Activated CD8-positive, alpha-beta memory T cell treated with anti-CD3 and anti-CD28 coated beads, Interleukin-2, amount 10 ng/mL, durations not matched to agents 7 days and 5 days (primary cell): ENCODE measurements at regions of chr6 and their contacts with region 1.

Region 1: GRCh38 chr6:154675602-154676088 is 57.6 kb upstream of the SCAF8 start:
- DNase-seq: peak; percentile 92
- ATAC-seq: peak; percentile 100
- H3K4me3 Mint-ChIP-seq: no peak overlapping the region
- H3K27ac Mint-ChIP-seq: no peak overlapping the region
- H3K4me1 Mint-ChIP-seq: no peaks in the 10 kb centered on the region
- H3K27me3 Mint-ChIP-seq: peaks cover 4% of the 10 kb centered on the region

Region 2: GRCh38 chr6:154488802-154489437 is 186.7 kb before region 1 on chr6:
- CTCF ChIA-PET with region 1: no interaction called
- DNase-seq: no peak
- ATAC-seq: no peak
- H3K4me3 Mint-ChIP-seq: no peak overlapping the region
- H3K27ac Mint-ChIP-seq: no peak overlapping the region
- H3K4me1 Mint-ChIP-seq: no peaks in the 10 kb centered on the region
- H3K27me3 Mint-ChIP-seq: peaks cover 3% of the 10 kb centered on the region

Region 3: DNA sequence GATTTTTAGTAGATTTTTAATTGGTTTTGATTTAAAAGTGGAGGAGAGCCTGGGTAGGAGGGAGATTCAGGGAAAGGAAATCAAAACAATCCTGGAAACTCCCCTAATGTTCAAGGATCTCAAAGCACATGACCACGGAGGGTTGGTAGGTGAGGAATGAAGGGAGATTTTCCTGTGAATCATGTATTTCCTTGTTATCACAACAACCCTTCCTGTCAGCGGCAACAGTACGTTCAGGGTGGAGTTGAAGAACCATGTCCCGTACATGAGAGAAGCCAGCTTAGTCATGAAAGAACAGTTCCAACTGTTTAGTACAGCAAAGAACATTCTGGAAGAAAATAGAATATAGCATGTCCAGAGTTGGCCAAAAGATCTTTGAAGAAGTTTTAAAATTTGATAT is 21.8 kb before region 1 on chr6:
- CTCF ChIA-PET with region 1: no interaction called
- DNase-seq: no peak
- ATAC-seq: no peak
- H3K4me3 Mint-ChIP-seq: no peak overlapping the region
- H3K27ac Mint-ChIP-seq: no peak overlapping the region
- H3K4me1 Mint-ChIP-seq: no peaks in the 10 kb centered on the region
- H3K27me3 Mint-ChIP-seq: peaks cover 4% of the 10 kb centered on the region

Region 4: DNA sequence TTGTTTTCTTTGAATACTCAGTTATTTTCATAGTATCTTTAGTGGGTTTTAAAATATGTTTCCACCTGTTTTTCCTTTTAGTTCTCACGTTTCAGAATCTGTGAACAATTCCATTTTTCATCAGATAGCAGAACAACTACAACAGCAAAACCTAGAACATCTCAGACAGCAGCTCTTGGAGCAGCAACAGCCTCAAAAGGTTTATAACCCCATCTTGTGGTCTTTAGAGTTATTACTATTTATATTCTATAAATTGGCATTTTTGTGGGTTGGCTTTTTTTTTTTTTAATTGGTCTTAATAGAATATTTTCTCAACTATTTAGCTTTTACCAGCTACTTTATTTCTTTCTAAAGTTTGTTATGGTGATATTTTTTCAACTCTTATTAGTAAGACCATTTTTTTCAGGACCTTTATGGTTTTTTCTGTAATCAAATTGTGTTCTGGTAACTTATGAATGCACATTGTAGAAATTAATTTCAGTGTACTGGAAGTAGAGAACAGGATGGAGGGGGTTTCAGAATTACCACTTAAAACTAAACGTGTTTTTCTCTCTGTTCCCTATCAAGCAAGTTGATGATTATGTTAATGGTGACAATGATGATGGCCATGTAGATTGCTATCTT is 129.8 kb after region 1 on chr6:
- CTCF ChIA-PET with region 1: interaction called, 55 read pairs
- DNase-seq: no peak
- ATAC-seq: no peak
- H3K4me3 Mint-ChIP-seq: no peak overlapping the region
- H3K27ac Mint-ChIP-seq: no peak overlapping the region
- H3K4me1 Mint-ChIP-seq: peaks cover under 1% of the 10 kb centered on the region
- H3K27me3 Mint-ChIP-seq: no peaks in the 10 kb centered on the region

Region 5: GRCh38 chr6:154928325-154928922 is 252.8 kb after region 1 on chr6:
- CTCF ChIA-PET with region 1: interaction called, 27 read pairs
- DNase-seq: peak; percentile 74
- ATAC-seq: peak; percentile 76
- H3K4me3 Mint-ChIP-seq: no peak overlapping the region
- H3K27ac Mint-ChIP-seq: no peak overlapping the region
- H3K4me1 Mint-ChIP-seq: peaks cover 5% of the 10 kb centered on the region
- H3K27me3 Mint-ChIP-seq: no peaks in the 10 kb centered on the region